Uterus (tissue), 4 donors: ENCODE measurements at regions of chr14 and their contacts with region 1.

Region 1: GRCh38 chr14:104708606-104709268 is 15.3 kb upstream of the ADSS1 start:
- DNase-seq: peak; percentile 71 to 74
- H3K4me3 ChIP-seq: no peak overlapping the region
- H3K27ac ChIP-seq: no peak overlapping the region
- H3K4me1 ChIP-seq: no peaks in the 10 kb centered on the region
- H3K27me3 ChIP-seq: no peaks in the 10 kb centered on the region
- CTCF ChIP-seq: peak; percentile 96 to 100 (median 98)
- POLR2A ChIP-seq: no peak

Region 2: GRCh38 chr14:104651876-104652260 is 56.9 kb before region 1 on chr14:
- intact Hi-C with region 1: loop called (anchors 2 kb)
- DNase-seq: no peak
- H3K4me3 ChIP-seq: no peak overlapping the region
- H3K27ac ChIP-seq: no peak overlapping the region
- H3K4me1 ChIP-seq: no peaks in the 10 kb centered on the region
- H3K27me3 ChIP-seq: no peaks in the 10 kb centered on the region
- CTCF ChIP-seq: no peak
- POLR2A ChIP-seq: no peak